PC-9 (cell line): ENCODE measurements at regions of chr11 and their contacts with region 1.

Region 1: GRCh38 chr11:108568195-108568858 is 25.2 kb downstream of the EXPH5 start:
- DNase-seq: no peak
- H3K4me3 ChIP-seq: no peak overlapping the region
- H3K27ac ChIP-seq: no peak overlapping the region
- H3K4me1 ChIP-seq: no peaks in the 10 kb centered on the region; the same call in 1 of the 2 replicates
- H3K27me3 ChIP-seq: no peaks in the 10 kb centered on the region
- CTCF ChIP-seq: no peak

Region 2: DNA sequence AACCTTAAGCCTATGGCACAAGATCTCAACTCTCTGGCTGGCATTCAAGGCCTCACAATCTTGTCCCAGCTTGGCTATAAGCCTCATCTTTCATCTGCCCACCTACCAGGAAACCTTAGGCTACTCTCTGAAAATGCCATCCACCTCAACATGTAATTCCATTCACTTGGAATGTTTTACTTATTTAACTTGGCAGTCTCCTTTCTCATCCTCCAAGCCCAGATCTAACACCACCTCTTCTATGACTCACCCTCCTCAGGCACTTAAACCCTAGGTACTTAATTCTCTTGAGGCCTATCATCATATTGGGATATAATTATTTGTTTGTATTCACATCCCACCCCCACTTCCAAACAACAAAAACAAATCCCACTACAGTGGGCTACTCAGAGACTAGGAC is 85.2 kb before region 1 on chr11:
- CTCF ChIA-PET with region 1: no interaction called
- POLR2A ChIA-PET with region 1: no interaction called
- intact Hi-C with region 1: no loop called
- DNase-seq: no peak
- H3K4me3 ChIP-seq: no peak overlapping the region
- H3K27ac ChIP-seq: no peak overlapping the region
- H3K4me1 ChIP-seq: no peaks in the 10 kb centered on the region
- H3K27me3 ChIP-seq: no peaks in the 10 kb centered on the region
- CTCF ChIP-seq: no peak

Region 3: DNA sequence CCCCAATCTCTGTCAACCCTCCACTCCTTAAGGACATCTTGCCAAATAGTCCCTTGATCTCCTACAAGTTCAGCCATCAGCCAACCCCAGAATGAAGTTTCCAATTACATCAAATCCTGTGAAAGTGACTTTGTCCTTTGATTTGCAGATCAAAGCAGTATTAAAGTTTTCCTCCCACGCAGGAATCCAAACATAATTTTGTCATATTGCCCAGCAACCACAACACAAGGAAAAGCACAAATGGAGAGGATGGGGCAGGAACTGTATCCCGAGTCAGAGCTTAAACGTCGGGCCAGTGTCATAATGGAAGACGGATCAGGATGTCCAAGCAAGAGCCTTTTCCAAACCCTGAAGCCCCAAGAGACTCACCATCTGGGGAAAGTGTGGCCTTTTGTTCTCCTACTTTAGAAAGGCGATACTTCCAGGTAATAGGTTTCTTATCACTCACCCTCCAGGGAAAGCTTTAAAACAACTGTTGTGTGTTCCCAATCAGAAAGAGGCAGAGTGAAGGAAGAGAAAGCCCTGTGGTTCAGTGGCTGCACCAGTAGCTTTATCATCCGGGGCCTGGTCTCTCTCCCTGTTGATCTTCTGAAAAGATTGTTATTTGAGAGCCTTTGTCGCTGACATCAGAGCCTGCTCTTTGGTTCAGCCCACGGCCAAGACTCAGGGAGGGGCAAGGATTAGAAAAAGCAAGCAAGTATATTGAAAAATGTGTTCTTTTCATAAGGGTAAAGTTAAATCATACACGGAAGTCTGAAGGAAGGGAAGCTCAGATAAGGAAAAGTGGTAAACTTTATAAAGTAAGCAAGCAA is 16.5 kb before region 1 on chr11:
- CTCF ChIA-PET with region 1: no interaction called
- POLR2A ChIA-PET with region 1: interaction called, 10 read pairs
- intact Hi-C with region 1: no loop called
- DNase-seq: no peak
- H3K4me3 ChIP-seq: no peak overlapping the region
- H3K27ac ChIP-seq: no peak overlapping the region
- H3K4me1 ChIP-seq: no peaks in the 10 kb centered on the region
- H3K27me3 ChIP-seq: no peaks in the 10 kb centered on the region
- CTCF ChIP-seq: no peak